PC-9 (cell line): ENCODE measurements at regions of chr5 and their contacts with region 1.

Region 1: GRCh38 chr5:17316970-17317459 is 99.6 kb downstream of the BASP1 start:
- DNase-seq: peak; percentile 50 to 76
- H3K4me3 ChIP-seq: peak overlapping the region; percentile 6; the same call in 1 of the 2 replicates
- H3K27ac ChIP-seq: peak overlapping the region; percentile 33; the same call in 1 of the 2 replicates
- H3K4me1 ChIP-seq: peaks cover 48% of the 10 kb centered on the region
- H3K27me3 ChIP-seq: no peaks in the 10 kb centered on the region
- CTCF ChIP-seq: no peak

Region 2: DNA sequence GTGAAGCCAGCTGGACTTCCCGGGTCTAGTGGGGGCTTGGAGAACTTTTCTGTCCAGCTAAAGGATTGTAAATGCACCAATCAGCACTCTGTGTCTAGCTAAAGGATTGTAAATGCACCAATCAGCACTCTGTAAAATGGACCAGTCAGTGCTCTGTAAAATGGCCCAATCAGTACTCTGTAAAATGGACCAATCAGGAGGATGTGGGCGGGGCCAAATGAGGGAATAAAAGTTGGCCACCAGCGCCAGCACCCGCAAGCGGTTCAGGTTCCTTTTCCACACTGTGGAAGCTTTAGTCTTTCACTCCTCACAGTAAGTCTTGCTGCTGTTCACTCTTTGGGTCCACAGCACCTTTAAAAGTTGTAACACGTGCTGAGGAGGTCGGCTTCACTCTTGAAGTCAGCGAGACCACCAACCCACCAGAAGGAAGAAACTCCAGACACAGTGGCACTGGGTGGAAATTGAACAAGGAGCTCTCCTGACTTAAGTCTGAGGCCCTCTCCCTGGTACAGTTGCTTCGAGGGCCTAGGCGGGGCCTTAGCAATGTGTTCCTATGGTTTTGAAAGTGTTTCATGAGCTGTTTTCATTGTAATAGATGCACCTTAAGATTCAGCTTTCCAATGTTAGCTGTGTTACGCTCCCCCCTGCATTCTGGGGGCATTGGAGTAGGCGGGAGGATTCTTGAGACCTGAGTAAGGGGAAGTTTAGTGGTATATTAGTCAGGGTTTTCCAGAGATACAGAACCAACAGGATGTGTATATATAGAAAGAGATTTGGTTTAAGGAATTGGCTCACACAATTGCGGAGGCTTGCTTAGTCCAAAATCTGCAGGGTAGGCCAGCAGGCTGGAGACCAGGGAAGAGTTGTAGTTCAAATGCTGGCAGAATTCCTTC is 359.5 kb before region 1 on chr5:
- CTCF ChIA-PET with region 1: interaction called, 10 read pairs
- POLR2A ChIA-PET with region 1: no interaction called
- intact Hi-C with region 1: no loop called
- DNase-seq: no peak
- H3K4me3 ChIP-seq: no peak overlapping the region
- H3K27ac ChIP-seq: no peak overlapping the region
- H3K4me1 ChIP-seq: no peaks in the 10 kb centered on the region
- H3K27me3 ChIP-seq: no peaks in the 10 kb centered on the region
- CTCF ChIP-seq: no peak

Region 3: DNA sequence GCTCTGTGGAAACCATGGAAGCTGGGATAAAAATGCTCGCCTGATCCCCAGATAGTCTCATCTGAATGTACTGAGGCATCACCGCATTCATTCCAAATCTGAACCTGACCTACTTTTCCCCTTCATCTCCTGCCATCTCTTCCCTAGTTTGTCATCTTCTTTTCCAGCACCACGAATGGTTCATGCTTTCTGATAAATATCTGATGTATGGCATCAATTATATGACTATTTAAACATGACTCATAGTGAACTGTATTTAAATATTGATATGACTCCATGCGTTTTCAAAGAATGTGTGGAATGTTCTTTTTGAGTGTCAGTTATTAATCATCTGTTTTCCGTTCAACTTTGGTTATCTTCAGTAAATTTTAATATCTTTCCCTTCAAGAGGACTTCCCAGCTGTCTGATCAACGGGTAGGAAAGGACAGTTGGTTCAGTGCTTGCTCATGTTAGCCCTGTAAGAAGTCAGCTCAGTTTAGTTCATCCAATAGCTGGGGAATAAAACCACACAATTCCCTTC is 78.4 kb before region 1 on chr5:
- CTCF ChIA-PET with region 1: no interaction called
- POLR2A ChIA-PET with region 1: no interaction called
- intact Hi-C with region 1: loop called (anchors 5 kb)
- DNase-seq: peak in 1 of 2 experiments; percentile 54
- H3K4me3 ChIP-seq: no peak overlapping the region
- H3K27ac ChIP-seq: no peak overlapping the region
- H3K4me1 ChIP-seq: peaks cover 5% of the 10 kb centered on the region
- H3K27me3 ChIP-seq: no peaks in the 10 kb centered on the region
- CTCF ChIP-seq: no peak

Region 4: DNA sequence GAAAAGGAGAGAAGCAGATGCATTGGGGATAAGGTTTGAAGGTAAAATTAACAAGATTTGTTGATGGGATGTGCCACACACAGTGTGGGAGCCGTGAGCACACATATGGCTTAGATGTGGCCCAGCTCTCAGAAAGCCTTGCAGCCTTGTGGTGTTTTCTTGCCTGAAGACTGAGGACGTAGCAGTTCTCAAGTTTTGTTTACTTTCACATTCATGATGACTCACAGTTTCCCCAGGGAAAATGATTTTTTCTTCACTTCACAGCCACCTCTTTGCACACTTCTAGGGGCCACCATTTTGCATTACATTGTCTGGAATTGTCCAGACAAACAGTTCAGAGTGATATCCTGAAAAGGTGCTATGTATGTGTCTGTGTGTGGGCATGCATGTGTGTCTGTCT is 26.7 kb after region 1 on chr5:
- CTCF ChIA-PET with region 1: no interaction called
- POLR2A ChIA-PET with region 1: no interaction called
- intact Hi-C with region 1: loop called (anchors 1 kb)
- DNase-seq: peak; percentile 24 to 40
- H3K4me3 ChIP-seq: no peak overlapping the region
- H3K27ac ChIP-seq: no peak overlapping the region
- H3K4me1 ChIP-seq: peaks cover 28% of the 10 kb centered on the region
- H3K27me3 ChIP-seq: no peaks in the 10 kb centered on the region
- CTCF ChIP-seq: no peak

Region 5: DNA sequence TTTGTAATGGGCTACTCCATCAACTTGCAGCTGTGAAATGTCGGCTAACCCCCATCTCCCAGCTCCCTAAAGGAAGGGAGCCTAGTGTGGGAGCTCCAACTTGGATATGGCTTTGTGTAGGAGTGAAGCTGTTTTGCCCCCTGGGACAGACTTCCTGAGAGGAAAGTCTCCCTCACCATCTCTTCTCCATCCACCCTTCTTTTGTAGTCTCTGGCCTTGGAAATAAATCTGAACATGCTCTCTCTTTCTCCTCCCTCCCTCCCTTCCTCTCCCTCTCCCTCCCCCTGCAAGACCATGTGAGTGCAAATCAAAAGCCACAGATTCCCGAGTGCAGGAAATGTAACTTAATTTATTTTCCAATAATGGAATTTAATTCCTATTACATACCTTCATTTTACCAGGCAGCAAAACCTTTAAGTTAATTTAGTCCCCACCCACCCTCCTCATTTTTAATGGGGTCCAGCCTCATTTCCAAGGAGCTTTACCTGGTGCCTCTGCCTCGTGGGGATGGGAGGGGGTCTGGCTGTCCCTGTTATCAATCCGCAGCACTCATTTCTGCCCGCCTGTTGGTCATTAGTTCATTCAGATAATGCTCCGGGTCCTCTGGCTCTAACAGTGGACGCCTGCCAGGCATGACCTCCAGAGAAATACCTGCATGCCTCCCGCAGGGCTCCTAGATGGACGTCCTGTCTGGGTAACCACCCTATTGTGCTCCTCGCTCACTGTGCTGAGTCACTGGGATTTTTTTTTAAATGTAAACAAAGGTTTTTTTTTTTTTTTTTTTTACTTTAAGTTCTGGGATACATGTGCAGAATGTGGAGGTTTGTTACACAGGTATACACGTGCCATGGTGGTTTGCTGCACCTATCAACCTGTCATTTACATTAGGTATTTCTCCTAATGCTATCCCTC is 58.2 kb after region 1 on chr5:
- CTCF ChIA-PET with region 1: no interaction called
- POLR2A ChIA-PET with region 1: interaction called, 4 read pairs
- intact Hi-C with region 1: loop called (anchors 1 kb)
- DNase-seq: peak; percentile 74 to 83
- H3K4me3 ChIP-seq: peak overlapping the region; percentile 43; the same call in 1 of the 2 replicates
- H3K27ac ChIP-seq: no peak overlapping the region; the same call in 1 of the 2 replicates
- H3K4me1 ChIP-seq: peaks cover 30% of the 10 kb centered on the region
- H3K27me3 ChIP-seq: no peaks in the 10 kb centered on the region
- CTCF ChIP-seq: no peak